ENCODE measurements at regions of chr14 and their contacts with region 1.

Region 1: DNA sequence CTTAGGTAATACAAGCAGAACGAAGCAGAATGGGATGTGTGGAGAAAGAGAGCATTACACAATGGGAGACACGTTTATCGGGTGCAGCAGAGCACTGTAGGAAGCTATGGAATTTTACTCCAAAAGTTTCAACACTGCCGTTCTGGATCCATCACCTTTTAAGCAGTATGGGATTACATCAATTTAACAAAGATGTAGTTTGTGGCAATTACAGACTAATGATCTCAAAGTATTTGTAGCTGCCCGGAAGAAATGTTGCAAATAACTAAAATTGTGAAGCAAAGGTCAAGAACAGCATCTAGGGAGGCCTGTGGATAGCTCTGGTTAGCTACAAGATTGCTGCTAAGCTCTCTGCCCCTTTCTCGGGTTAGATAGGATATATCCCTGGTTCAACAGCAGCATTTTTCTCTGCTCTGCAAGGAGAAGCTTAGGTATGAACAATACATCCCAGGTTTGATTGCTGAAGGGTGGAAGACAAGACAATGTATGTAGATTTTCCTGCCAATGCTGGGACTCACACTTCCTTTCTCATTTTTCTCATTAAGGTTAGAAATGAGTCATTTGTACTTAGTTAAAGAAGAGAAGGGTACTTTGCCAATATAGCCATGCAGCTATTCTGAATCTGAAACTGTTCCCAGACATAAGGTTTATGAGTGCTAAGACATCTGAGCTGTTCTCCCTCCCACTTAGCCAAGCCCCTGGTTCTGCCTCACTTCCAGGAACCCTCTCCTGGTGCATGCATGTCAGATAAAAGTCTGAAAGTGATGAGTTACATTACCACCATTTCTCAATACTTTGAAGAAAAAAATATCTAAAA is 75.0 kb upstream of the HIF1A start:
- DNase-seq: no peak
- H3K4me3 ChIP-seq: no peak overlapping the region
- H3K27ac ChIP-seq: no peak overlapping the region
- H3K4me1 ChIP-seq: no peaks in the 10 kb centered on the region
- CTCF ChIP-seq: no peak

Region 2: GRCh38 chr14:61019537-61019936 is 600.8 kb before region 1 on chr14:
- CTCF ChIA-PET with region 1: no interaction called
- POLR2A ChIA-PET with region 1: no interaction called
- intact Hi-C with region 1: no loop called
- DNase-seq: no peak
- H3K4me3 ChIP-seq: no peak overlapping the region
- H3K27ac ChIP-seq: no peak overlapping the region
- H3K4me1 ChIP-seq: no peaks in the 10 kb centered on the region
- CTCF ChIP-seq: no peak

Region 3: DNA sequence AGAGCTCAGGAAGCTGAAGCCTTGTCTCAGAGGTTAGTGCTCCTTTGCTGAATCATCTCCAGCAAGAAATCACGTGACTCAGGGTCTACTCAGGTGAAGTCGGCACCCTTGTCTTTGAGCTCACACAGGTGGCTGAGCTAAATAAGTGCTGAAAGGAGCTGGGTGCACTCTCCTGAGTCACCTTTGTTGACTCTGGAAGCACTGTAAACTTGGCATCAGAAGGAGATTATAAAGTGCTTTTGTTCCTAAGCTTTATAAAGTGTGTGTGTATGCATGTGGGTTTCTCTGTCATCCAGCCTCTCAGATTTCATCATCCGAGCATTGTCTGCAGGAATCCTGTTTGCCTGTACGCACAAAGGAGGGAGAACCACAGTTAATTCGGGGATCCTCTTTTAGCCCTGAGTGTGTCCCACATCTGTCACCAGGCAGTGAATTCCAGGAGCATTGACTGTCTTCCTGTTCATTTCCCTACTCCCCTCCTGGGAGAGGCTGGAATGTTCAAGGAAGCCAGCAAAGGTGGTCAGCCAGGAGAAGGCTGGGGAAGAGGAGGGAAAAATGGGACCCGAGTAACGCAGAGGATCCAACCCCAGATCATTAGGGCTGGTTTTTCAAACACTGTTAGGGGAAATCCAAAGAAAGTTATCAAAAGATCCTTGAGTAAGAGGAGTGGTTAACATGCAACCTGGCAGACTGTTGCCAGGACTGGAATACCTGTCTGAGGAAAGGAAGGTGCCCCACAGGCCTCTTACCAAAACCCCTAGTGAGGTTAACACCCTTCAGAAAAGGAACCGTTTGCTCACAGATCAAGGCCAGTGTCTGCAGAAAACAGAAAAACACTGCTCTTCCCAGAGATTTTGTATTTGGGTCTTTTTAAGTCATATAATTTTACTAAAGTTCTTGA is 82.5 kb before region 1 on chr14:
- CTCF ChIA-PET with region 1: no interaction called
- POLR2A ChIA-PET with region 1: no interaction called
- intact Hi-C with region 1: no loop called
- DNase-seq: peak; percentile 37
- H3K4me3 ChIP-seq: no peak overlapping the region
- H3K27ac ChIP-seq: no peak overlapping the region
- H3K4me1 ChIP-seq: peaks cover 13% of the 10 kb centered on the region
- CTCF ChIP-seq: no peak

Region 4: GRCh38 chr14:61562345-61563165 is 57.8 kb before region 1 on chr14:
- CTCF ChIA-PET with region 1: no interaction called
- POLR2A ChIA-PET with region 1: no interaction called
- intact Hi-C with region 1: no loop called
- DNase-seq: no peak
- H3K4me3 ChIP-seq: no peak overlapping the region
- H3K27ac ChIP-seq: no peak overlapping the region
- H3K4me1 ChIP-seq: peaks cover 46% of the 10 kb centered on the region
- CTCF ChIP-seq: no peak

Region 5: GRCh38 chr14:61631045-61631687 is 10.8 kb after region 1 on chr14:
- CTCF ChIA-PET with region 1: no interaction called
- POLR2A ChIA-PET with region 1: interaction called, 15 read pairs
- intact Hi-C with region 1: no loop called
- DNase-seq: no peak
- H3K4me3 ChIP-seq: no peak overlapping the region
- H3K27ac ChIP-seq: no peak overlapping the region
- H3K4me1 ChIP-seq: no peaks in the 10 kb centered on the region
- CTCF ChIP-seq: no peak